Sciatic nerve (tissue), 2 donors: ENCODE measurements at regions of chr22 and their contacts with region 1.

Region 1: GRCh38 chr22:24247011-24247507 is 2.2 kb upstream of the GGT5 start:
- DNase-seq: no peak
- ATAC-seq: peak; percentile 50

Region 2: GRCh38 chr22:22520020-22520656 is 1726.9 kb before region 1 on chr22 and contains the start of gene ZNF280A:
- intact Hi-C with region 1: no loop called
- DNase-seq: no peak
- ATAC-seq: peak; percentile 62
- total RNA-seq, gene ZNF280A: not detected

Region 3: DNA sequence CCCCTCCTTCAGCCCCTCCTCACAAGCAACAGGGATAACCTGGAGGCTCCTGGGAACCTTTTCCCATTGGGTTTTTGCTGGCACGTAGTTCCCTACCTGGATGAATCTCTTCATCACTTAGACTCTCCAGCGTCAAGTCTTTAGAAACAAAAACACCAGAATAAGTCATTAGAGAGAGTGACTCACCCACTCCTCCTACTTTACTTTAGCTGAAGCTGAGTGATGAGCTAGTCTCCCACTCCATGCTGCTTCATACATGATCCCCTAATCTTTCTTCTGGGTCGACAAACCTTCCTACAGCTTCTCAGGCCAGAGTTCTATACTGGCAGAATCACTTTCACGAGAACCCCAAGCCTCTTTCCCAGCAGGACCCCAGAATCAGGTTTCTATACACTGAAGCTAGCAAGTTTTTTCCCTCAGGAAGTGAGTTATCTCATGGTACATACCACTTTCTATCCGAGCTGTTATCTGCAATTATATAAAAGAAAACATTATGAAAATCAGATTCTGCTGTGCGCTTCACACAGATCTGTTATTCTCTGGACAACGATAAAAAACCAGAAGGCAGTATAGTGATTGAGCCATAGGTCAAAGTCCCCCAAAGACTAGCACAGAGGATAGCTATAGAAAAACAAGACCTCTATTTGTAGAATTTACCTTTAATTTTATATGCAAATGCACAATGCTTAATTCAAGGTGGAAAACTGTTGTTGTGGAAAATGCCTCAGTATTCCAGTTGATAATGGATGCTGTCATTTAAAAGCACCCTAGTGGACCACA is 633.7 kb before region 1 on chr22:
- intact Hi-C with region 1: no loop called
- DNase-seq: no peak
- ATAC-seq: no peak

Region 4: GRCh38 chr22:24189249-24190158 is 57.6 kb before region 1 on chr22:
- intact Hi-C with region 1: loop called (anchors 5 kb)
- DNase-seq: peak; percentile 87
- ATAC-seq: peak; percentile 91

Region 5: DNA sequence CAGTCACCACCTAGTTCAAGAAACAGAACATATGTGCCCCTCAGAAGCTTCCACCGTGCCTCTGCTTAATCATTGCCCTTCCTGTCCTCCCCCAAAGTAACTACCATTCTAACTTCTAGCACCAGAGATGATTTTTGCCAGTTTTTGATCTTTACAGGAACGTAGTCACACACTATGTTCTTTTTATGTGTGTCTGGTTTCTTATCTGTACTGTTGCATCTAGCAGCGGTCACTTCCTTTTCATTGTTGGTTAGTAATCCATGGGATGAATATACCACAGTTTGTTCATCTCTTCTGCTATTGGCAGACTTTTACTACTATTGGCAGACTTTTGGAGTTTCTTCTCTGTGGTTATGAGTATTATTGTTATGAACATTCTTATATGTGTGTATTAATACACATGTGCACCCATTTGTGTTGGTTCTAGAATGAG is 58.2 kb after region 1 on chr22:
- intact Hi-C with region 1: no loop called
- DNase-seq: no peak
- ATAC-seq: no peak